ENCODE measurements at regions of chr9 and their contacts with region 1.

Region 1: GRCh38 chr9:72364679-72365524 is at the start of gene ZFAND5:
- DNase-seq: peak; percentile 83 to 85
- H3K4me3 ChIP-seq: peak within 1 kb of the TSS; percentile 56
- H3K4me3 Mint-ChIP-seq: peak within 1 kb of the TSS; percentile 84
- H3K27ac Mint-ChIP-seq: peak within 1 kb of the TSS; percentile 88
- H3K4me1 ChIP-seq: no peaks in the 10 kb centered on the region
- H3K4me1 Mint-ChIP-seq: no peaks in the 10 kb centered on the region
- H3K27me3 ChIP-seq: no peaks in the 10 kb centered on the region
- H3K27me3 Mint-ChIP-seq: no peaks in the 10 kb centered on the region
- CTCF ChIP-seq: no peak
- total RNA-seq, gene ZFAND5: 30.9 and 34.4 TPM in 2 replicates

Region 2: DNA sequence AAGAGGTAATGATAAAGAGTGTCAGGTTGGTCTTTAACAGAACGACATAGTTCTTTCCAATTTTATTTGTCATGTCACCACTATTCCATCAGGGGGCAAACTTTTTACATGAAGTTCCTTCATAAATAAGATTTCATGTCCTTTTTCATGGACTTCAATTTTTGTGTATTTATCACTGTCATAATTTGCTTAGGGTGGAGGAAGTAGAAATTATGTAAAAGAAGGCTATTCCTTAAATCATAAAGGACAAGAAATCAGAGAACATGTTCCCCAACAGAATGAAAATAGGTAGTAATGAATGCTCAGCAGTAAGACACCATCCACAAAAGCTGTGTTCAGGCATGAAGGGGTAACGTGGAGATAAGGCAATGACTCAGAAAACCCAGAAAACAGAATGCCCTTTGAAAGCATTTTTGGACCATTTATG is 72.6 kb before region 1 on chr9:
- CTCF ChIA-PET with region 1: no interaction called
- POLR2A ChIA-PET with region 1: no interaction called
- intact Hi-C with region 1: loop called (anchors 2 kb)
- DNase-seq: no peak
- H3K4me3 ChIP-seq: no peak overlapping the region
- H3K4me3 Mint-ChIP-seq: no peak overlapping the region
- H3K27ac Mint-ChIP-seq: no peak overlapping the region
- H3K4me1 ChIP-seq: peaks cover 3% of the 10 kb centered on the region; the same call in 1 of the 2 replicates
- H3K4me1 Mint-ChIP-seq: peaks cover 4% of the 10 kb centered on the region
- H3K27me3 ChIP-seq: no peaks in the 10 kb centered on the region
- H3K27me3 Mint-ChIP-seq: no peaks in the 10 kb centered on the region
- CTCF ChIP-seq: no peak

Region 3: GRCh38 chr9:72428329-72428728 is 63.4 kb after region 1 on chr9:
- CTCF ChIA-PET with region 1: no interaction called
- POLR2A ChIA-PET with region 1: interaction called, 10 read pairs
- intact Hi-C with region 1: no loop called
- DNase-seq: no peak
- H3K4me3 ChIP-seq: no peak overlapping the region
- H3K4me3 Mint-ChIP-seq: no peak overlapping the region
- H3K27ac Mint-ChIP-seq: no peak overlapping the region
- H3K4me1 ChIP-seq: no peaks in the 10 kb centered on the region
- H3K4me1 Mint-ChIP-seq: no peaks in the 10 kb centered on the region
- H3K27me3 ChIP-seq: no peaks in the 10 kb centered on the region
- H3K27me3 Mint-ChIP-seq: no peaks in the 10 kb centered on the region
- CTCF ChIP-seq: no peak

Region 4: GRCh38 chr9:72473474-72474261 is 108.8 kb after region 1 on chr9:
- CTCF ChIA-PET with region 1: no interaction called
- POLR2A ChIA-PET with region 1: no interaction called
- intact Hi-C with region 1: loop called (anchors 5 kb)
- DNase-seq: no peak
- H3K4me3 ChIP-seq: no peak overlapping the region
- H3K4me3 Mint-ChIP-seq: no peak overlapping the region
- H3K27ac Mint-ChIP-seq: no peak overlapping the region
- H3K4me1 ChIP-seq: peaks cover 7% of the 10 kb centered on the region; the same call in 1 of the 2 replicates
- H3K4me1 Mint-ChIP-seq: no peaks in the 10 kb centered on the region
- H3K27me3 ChIP-seq: no peaks in the 10 kb centered on the region
- H3K27me3 Mint-ChIP-seq: no peaks in the 10 kb centered on the region
- CTCF ChIP-seq: no peak